PC-9 (cell line): ENCODE measurements at regions of chr4 and their contacts with region 1.

Region 1: DNA sequence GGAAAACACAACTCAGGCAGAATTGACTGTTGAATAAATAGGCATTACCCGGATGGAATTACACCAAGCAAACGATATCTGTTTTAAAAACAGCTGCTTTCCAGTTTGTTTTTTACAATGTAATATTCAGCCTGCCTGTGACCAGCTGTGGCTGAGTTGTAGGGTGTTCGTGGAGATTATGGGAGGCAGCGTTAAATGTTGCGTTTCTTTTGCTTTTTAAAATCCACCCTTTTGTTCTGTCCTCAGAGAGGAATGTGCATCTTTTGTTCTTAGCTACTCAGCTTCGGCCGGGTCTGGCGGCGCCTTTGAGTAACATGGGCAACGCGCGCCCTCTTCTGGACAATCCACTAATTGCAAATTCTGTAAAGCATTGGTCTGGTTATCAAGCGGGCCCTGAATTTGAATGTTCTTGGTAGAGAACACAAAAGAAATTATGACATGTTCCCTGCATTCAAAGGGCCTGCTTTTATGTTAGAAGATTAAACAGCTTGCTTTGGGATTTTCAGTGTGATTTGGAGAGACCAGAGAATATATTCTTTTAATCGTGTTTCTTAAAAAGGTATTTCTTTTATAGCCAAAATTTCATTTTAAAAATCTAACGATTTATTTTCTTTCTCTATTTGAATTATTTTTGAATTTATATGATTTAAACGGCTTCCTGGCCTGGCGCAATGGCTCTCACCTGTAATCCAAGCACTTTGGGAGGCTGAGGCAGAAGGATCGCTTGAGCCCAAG is 76.3 kb upstream of the TRIM2 start:
- DNase-seq: peak; percentile 63 to 84
- H3K4me3 ChIP-seq: no peak overlapping the region
- H3K27ac ChIP-seq: no peak overlapping the region
- H3K4me1 ChIP-seq: no peaks in the 10 kb centered on the region
- H3K27me3 ChIP-seq: no peaks in the 10 kb centered on the region
- CTCF ChIP-seq: peak; percentile 84

Region 2: GRCh38 chr4:152408514-152409327 is 719.2 kb before region 1 on chr4:
- CTCF ChIA-PET with region 1: no interaction called
- POLR2A ChIA-PET with region 1: no interaction called
- intact Hi-C with region 1: loop called (anchors 5 kb)
- DNase-seq: peak in 1 of 2 experiments; percentile 6
- H3K4me3 ChIP-seq: no peak overlapping the region
- H3K27ac ChIP-seq: no peak overlapping the region
- H3K4me1 ChIP-seq: no peaks in the 10 kb centered on the region
- H3K27me3 ChIP-seq: no peaks in the 10 kb centered on the region
- CTCF ChIP-seq: peak; percentile 65

Region 3: DNA sequence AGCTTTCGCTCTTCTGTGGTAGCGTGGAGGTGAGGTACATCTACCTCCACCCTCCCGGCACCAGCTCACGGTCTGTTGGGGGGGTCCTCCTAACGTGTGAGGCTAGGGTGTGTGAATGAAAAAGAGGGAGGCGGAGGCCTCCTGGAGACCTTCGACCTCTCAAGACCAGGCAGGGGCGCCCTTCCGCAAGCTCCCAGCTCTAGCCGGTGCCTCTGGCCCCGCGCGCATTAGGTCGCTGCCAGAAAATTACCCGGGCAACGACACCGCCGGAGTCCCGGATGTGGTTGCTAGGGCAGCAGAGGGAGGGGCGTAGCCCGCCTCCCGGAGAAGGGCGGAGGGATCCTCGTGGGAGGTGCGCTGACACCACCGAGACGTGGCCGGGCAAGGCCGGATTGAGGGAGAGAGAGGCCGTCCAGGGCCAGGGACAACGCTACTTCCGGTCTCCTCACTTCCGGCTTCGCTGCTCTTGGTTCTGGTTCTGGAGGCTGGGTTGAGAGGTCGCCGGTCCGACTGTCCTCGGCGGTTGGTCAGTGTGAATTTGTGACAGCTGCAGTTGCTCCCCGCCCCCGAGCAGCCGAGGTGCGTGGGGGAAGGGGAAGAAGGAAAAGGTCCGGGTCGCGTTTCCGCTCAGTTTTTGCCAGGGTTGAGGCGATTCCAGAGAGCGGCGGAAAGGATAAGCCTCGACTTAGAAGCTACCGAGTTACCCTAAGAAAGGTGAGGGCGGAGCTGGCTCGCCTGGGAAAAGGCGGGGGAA is 348.2 kb before region 1 on chr4 and contains the starts of genes ARFIP1 and TIGD4:
- CTCF ChIA-PET with region 1: no interaction called
- POLR2A ChIA-PET with region 1: no interaction called
- intact Hi-C with region 1: loop called (anchors 5 kb)
- DNase-seq: peak; percentile 82 to 97
- H3K4me3 ChIP-seq: peak within 1 kb of the TSS; percentile 72
- H3K27ac ChIP-seq: peak within 1 kb of the TSS; percentile 71
- H3K4me1 ChIP-seq: peaks cover 24% of the 10 kb centered on the region; the same call in 1 of the 2 replicates
- H3K27me3 ChIP-seq: no peaks in the 10 kb centered on the region
- CTCF ChIP-seq: no peak
- total RNA-seq, gene ARFIP1: 37.4 and 38.4 TPM in 2 replicates
- total RNA-seq, gene TIGD4: 0.35 and 0.70 TPM in 2 replicates

Region 4: GRCh38 chr4:152937336-152938236 is 190.3 kb before region 1 on chr4:
- CTCF ChIA-PET with region 1: no interaction called
- POLR2A ChIA-PET with region 1: no interaction called
- intact Hi-C with region 1: loop called (anchors 1 kb)
- DNase-seq: peak in 1 of 2 experiments; percentile 39
- H3K4me3 ChIP-seq: peak overlapping the region; percentile 80
- H3K27ac ChIP-seq: no peak overlapping the region
- H3K4me1 ChIP-seq: peaks cover 4% of the 10 kb centered on the region; the same call in 1 of the 2 replicates
- H3K27me3 ChIP-seq: no peaks in the 10 kb centered on the region
- CTCF ChIP-seq: no peak

Region 5: DNA sequence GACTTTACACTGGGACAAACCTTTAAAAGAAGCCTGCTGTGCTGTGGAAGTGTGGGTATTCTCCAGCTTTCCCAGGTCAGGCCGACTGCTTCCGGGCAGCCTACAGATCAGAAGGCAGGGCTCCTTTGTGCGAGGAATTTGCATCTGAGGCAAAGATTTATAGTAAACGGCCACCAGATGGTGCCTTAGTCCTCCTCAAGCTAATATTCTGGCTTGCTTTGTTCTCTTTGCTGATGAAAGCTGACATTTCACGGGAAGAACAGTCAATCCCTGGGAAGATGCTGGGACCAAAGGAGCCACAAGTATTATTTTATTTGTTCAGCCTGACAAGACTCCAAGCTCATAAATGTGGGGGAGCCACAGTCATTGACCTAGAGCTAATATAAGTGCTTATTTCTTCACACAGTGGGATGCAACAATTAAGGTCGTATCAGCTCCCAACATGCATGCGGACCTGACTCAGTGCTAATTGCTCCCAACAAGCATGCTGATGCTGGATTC is 44.4 kb before region 1 on chr4:
- CTCF ChIA-PET with region 1: interaction called, 5 read pairs
- POLR2A ChIA-PET with region 1: no interaction called
- intact Hi-C with region 1: loop called (anchors 1 kb)
- DNase-seq: peak; percentile 55 to 66
- H3K4me3 ChIP-seq: no peak overlapping the region
- H3K27ac ChIP-seq: peak overlapping the region; percentile 49; the same call in 1 of the 2 replicates
- H3K4me1 ChIP-seq: peaks cover 18% of the 10 kb centered on the region
- H3K27me3 ChIP-seq: no peaks in the 10 kb centered on the region
- CTCF ChIP-seq: peak; percentile 70

Region 6: DNA sequence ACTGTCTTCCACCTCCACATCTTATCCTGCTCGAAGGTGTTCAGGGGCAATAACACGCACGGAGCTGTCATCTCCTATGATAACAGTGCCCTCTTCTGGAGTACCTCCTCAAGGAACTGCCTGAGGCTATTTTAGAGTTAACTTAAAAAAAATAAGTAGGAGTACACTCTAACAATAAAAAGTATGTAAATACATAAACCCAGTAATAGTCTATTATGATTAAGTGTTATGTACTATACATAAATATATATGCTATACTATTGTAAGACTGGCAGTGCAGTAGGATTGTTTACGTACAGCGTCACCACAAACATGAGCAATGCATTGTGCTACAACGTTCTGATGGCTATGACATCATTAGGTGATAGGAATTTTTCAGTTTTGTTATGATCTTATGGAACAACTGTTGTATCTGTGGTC is 521.7 kb after region 1 on chr4:
- CTCF ChIA-PET with region 1: no interaction called
- POLR2A ChIA-PET with region 1: no interaction called
- intact Hi-C with region 1: loop called (anchors 5 kb)
- DNase-seq: peak in 1 of 2 experiments; percentile 5
- H3K4me3 ChIP-seq: no peak overlapping the region
- H3K27ac ChIP-seq: no peak overlapping the region
- H3K4me1 ChIP-seq: peaks cover 19% of the 10 kb centered on the region
- H3K27me3 ChIP-seq: no peaks in the 10 kb centered on the region
- CTCF ChIP-seq: no peak; the same call in 1 of the 2 replicates